Activated CD4-positive, alpha-beta T cell treated with anti-CD3 and anti-CD28 coated beads for 36 hours (primary cell): ENCODE measurements at regions of chr16 and their contacts with region 1.

Region 1: GRCh38 chr16:57084257-57084770 is 8.1 kb upstream of the CPNE2 start:
- DNase-seq: peak; percentile 86
- ATAC-seq: peak; percentile 83
- H3K4me3 Mint-ChIP-seq: no peak overlapping the region
- H3K27ac Mint-ChIP-seq: peak overlapping the region; percentile 49
- H3K4me1 Mint-ChIP-seq: peaks cover 8% of the 10 kb centered on the region
- H3K27me3 Mint-ChIP-seq: no peaks in the 10 kb centered on the region

Region 2: GRCh38 chr16:56789360-56789759 is 295.0 kb before region 1 on chr16:
- CTCF ChIA-PET with region 1: no interaction called
- POLR2A ChIA-PET with region 1: no interaction called
- intact Hi-C with region 1: no loop called
- DNase-seq: peak; percentile 54
- ATAC-seq: peak; percentile 65
- H3K4me3 Mint-ChIP-seq: no peak overlapping the region
- H3K27ac Mint-ChIP-seq: no peak overlapping the region
- H3K4me1 Mint-ChIP-seq: no peaks in the 10 kb centered on the region
- H3K27me3 Mint-ChIP-seq: no peaks in the 10 kb centered on the region

Region 3: GRCh38 chr16:57152096-57153093 is 68.1 kb after region 1 on chr16:
- CTCF ChIA-PET with region 1: interaction called, 10 read pairs
- POLR2A ChIA-PET with region 1: no interaction called
- intact Hi-C with region 1: no loop called
- DNase-seq: no peak
- ATAC-seq: peak; percentile 66
- H3K4me3 Mint-ChIP-seq: no peak overlapping the region
- H3K27ac Mint-ChIP-seq: peak overlapping the region; percentile 73
- H3K4me1 Mint-ChIP-seq: peaks cover 24% of the 10 kb centered on the region
- H3K27me3 Mint-ChIP-seq: no peaks in the 10 kb centered on the region

Region 4: DNA sequence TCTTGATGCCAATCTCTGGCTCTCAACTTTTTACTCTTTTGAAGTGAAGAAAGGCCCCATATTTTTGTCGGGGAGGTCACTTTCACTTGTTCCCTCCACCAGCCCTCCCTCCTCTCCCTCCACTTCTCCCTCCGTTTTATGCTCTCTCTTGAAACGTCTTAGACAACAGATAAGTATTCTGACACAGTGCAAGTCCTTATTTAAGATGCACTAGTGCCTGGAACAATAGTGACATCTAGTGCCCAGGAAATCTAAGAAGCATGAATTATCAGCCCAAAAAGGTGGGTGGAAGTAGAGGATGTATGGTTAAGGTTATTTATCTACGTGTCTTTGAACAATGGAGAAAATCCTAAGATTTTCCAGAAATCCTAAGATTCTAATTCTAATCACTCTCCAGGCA is 83.6 kb after region 1 on chr16:
- CTCF ChIA-PET with region 1: interaction called, 13 read pairs
- POLR2A ChIA-PET with region 1: interaction called, 5 read pairs
- intact Hi-C with region 1: loop called (anchors 1 kb)
- DNase-seq: no peak
- ATAC-seq: peak; percentile 88
- H3K4me3 Mint-ChIP-seq: no peak overlapping the region
- H3K27ac Mint-ChIP-seq: no peak overlapping the region
- H3K4me1 Mint-ChIP-seq: no peaks in the 10 kb centered on the region
- H3K27me3 Mint-ChIP-seq: no peaks in the 10 kb centered on the region

Region 5: GRCh38 chr16:57244767-57245471 is 160.6 kb after region 1 on chr16 and contains the start of gene ARL2BP:
- CTCF ChIA-PET with region 1: interaction called, 6 read pairs
- POLR2A ChIA-PET with region 1: no interaction called
- intact Hi-C with region 1: loop called in 1 of 2 experiments (anchors 2 kb)
- DNase-seq: peak; percentile 99
- ATAC-seq: peak; percentile 97
- H3K4me3 Mint-ChIP-seq: peak within 1 kb of the TSS; percentile 86
- H3K27ac Mint-ChIP-seq: peak within 1 kb of the TSS; percentile 92
- H3K4me1 Mint-ChIP-seq: peaks cover 19% of the 10 kb centered on the region
- H3K27me3 Mint-ChIP-seq: no peaks in the 10 kb centered on the region
- total RNA-seq, gene ARL2BP: 9.9 to 11.1 TPM

Region 6: GRCh38 chr16:57284208-57284951 is 200.1 kb after region 1 on chr16 and contains the start of gene PLLP:
- CTCF ChIA-PET with region 1: no interaction called
- POLR2A ChIA-PET with region 1: no interaction called
- intact Hi-C with region 1: loop called in 1 of 2 experiments (anchors 10 kb)
- DNase-seq: peak; percentile 53
- ATAC-seq: peak; percentile 56
- H3K4me3 Mint-ChIP-seq: peak within 1 kb of the TSS; percentile 73
- H3K27ac Mint-ChIP-seq: peak within 1 kb of the TSS; percentile 42
- H3K4me1 Mint-ChIP-seq: peaks cover 26% of the 10 kb centered on the region
- H3K27me3 Mint-ChIP-seq: no peaks in the 10 kb centered on the region
- total RNA-seq, gene PLLP: 0.30 to 0.33 TPM

Region 7: DNA sequence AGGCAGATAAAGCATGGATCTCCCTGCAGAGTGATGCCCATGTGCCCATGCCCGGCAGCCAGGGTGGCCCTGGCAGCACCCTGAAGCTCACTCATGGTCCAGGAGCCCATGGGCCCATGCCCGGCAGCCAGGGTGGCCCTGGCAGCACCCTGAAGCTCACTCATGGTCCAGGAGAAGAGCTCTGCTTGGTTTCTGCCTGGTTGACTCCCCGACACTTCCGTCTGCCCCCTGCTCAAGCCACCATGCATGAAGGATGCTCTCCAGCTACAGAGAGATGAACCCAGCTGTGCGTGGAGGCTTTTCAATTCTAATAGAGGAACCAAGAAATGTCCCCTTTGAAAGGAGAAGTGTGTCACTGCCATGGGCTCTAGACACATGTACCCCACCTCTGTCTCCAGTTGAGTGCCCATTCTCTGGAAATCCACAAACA is 329.0 kb after region 1 on chr16:
- CTCF ChIA-PET with region 1: interaction called, 4 read pairs
- POLR2A ChIA-PET with region 1: no interaction called
- intact Hi-C with region 1: loop called (anchors 2 to 10 kb)
- DNase-seq: no peak
- ATAC-seq: no peak
- H3K4me3 Mint-ChIP-seq: no peak overlapping the region
- H3K27ac Mint-ChIP-seq: no peak overlapping the region
- H3K4me1 Mint-ChIP-seq: peaks cover 10% of the 10 kb centered on the region
- H3K27me3 Mint-ChIP-seq: no peaks in the 10 kb centered on the region

Region 8: DNA sequence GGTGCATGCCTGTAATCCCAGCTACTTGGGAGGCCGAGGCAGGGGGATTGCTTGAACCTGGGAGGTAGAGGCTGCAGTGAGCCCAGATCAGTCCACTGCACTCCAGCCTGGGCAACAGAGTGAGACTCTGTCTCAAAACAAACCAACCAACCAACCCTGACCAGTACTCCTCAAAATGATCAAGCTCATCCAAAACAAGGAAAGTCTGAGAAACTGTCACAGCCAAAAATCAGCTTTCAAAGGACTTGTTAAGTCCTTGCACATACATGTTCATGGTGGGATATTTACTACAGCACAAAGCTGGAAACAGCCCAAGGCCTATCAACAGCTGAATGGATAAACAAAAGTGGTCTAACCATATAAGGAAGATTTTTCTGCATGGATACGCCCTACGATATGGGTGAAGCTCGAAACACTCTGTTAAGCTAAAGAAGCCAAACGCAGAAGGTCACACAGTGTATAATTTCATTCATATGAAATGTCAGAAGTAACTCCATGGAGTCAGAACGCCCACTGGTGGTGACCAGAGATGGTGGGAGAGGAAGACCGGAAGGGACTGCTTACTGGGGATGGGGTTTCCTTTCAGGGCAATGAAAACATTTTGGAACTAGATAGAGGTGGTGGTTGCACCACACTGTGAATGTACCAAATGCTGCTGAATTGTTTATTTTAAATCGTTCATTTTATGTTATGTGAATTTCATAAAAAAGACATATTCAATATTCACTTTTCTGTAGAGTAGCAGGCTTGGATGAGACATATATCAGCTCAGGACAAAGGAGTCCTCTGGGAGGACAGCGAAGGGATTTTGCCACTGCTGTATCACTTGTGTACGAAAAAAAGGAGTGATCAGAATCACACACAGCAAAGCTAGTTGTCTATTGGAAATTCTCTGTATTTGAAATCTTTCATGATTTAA is 338.0 kb after region 1 on chr16:
- CTCF ChIA-PET with region 1: interaction called, 4 read pairs
- POLR2A ChIA-PET with region 1: no interaction called
- intact Hi-C with region 1: loop called (anchors 2 to 10 kb)
- DNase-seq: no peak
- ATAC-seq: no peak
- H3K4me3 Mint-ChIP-seq: no peak overlapping the region
- H3K27ac Mint-ChIP-seq: no peak overlapping the region
- H3K4me1 Mint-ChIP-seq: peaks cover 12% of the 10 kb centered on the region
- H3K27me3 Mint-ChIP-seq: no peaks in the 10 kb centered on the region